Dendritic cell treated with granulocyte-macrophage colony-stimulating factor and Interleukin-4, amounts not matched to agents 40 ng/mL and 50 ng/mL, for 4 days (primary cell): ENCODE measurements at regions of chr12 and their contacts with region 1.

Region 1: DNA sequence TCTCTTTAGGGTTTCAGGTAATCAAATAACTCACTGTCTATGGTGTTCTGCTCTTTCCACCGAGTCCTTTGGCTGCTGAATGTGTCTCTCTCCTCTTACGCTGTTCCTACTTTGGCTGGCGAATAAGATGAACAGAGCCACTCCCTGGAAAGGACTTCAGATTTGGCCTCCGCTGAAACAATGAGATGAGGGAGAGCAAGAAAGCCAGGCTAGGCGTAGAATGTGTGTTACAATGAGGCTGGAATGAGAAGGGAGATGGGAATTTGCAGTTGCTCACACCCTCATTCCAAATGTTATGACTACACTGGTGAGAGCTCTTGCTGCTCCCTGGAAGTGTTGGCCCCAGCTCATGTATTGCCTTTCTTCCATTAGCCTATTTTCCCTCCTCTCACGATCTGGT is at the start of gene MFAP5:
- H3K4me3 Mint-ChIP-seq: no peak within 1 kb of the TSS
- H3K27ac Mint-ChIP-seq: no peak within 1 kb of the TSS
- H3K4me1 Mint-ChIP-seq: peaks cover 5% of the 10 kb centered on the region
- H3K27me3 Mint-ChIP-seq: peaks cover 4% of the 10 kb centered on the region

Region 2: GRCh38 chr12:8860165-8860961 is 197.8 kb after region 1 on chr12:
- intact Hi-C with region 1: loop called (anchors 10 kb)
- H3K4me3 Mint-ChIP-seq: no peak overlapping the region
- H3K27ac Mint-ChIP-seq: no peak overlapping the region
- H3K4me1 Mint-ChIP-seq: no peaks in the 10 kb centered on the region
- H3K27me3 Mint-ChIP-seq: no peaks in the 10 kb centered on the region

Region 3: GRCh38 chr12:8890313-8891085 is 227.9 kb after region 1 on chr12:
- intact Hi-C with region 1: loop called (anchors 10 kb)
- H3K4me3 Mint-ChIP-seq: peak overlapping the region; percentile 74
- H3K27ac Mint-ChIP-seq: peak overlapping the region; percentile 53
- H3K4me1 Mint-ChIP-seq: peaks cover 6% of the 10 kb centered on the region
- H3K27me3 Mint-ChIP-seq: peaks cover 2% of the 10 kb centered on the region

Region 4: DNA sequence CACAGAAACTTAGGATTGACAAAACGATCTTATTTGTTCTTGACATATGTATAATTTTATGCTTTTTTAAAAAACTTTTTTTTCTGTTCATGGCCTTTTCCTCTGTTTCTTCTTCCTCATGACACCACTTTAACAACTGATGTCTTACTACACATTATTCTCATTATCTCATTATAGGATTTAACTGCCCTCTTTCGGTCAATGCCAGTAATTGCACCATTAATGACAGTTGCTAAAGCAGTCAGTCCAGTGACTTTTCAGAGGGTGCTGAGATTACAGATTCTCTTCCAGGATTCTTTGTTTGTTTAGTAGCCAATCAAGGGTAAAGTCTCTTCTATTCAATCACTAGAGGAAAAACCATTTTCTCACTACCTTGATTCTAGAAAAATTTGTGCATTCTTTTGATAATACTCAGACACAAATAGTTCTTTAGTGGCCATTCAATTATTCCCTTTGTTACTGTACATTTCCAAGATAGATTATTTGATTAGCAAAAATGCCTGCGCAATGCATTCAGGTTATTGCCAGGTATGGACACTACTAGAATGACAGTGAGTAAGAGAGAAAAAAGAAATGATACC is 376.9 kb after region 1 on chr12:
- intact Hi-C with region 1: loop called (anchors 5 kb)
- H3K4me3 Mint-ChIP-seq: no peak overlapping the region
- H3K27ac Mint-ChIP-seq: no peak overlapping the region
- H3K4me1 Mint-ChIP-seq: no peaks in the 10 kb centered on the region
- H3K27me3 Mint-ChIP-seq: peaks cover 4% of the 10 kb centered on the region